HAP-1 (cell line): ENCODE measurements at regions of chr18 and their contacts with region 1.

Region 1: GRCh38 chr18:50009773-50010335 is 185.1 kb downstream of the MYO5B start:
- DNase-seq: peak; percentile 44 to 71
- H3K4me3 ChIP-seq: no peak overlapping the region
- H3K4me1 ChIP-seq: no peaks in the 10 kb centered on the region
- H3K27me3 ChIP-seq: no peaks in the 10 kb centered on the region

Region 2: DNA sequence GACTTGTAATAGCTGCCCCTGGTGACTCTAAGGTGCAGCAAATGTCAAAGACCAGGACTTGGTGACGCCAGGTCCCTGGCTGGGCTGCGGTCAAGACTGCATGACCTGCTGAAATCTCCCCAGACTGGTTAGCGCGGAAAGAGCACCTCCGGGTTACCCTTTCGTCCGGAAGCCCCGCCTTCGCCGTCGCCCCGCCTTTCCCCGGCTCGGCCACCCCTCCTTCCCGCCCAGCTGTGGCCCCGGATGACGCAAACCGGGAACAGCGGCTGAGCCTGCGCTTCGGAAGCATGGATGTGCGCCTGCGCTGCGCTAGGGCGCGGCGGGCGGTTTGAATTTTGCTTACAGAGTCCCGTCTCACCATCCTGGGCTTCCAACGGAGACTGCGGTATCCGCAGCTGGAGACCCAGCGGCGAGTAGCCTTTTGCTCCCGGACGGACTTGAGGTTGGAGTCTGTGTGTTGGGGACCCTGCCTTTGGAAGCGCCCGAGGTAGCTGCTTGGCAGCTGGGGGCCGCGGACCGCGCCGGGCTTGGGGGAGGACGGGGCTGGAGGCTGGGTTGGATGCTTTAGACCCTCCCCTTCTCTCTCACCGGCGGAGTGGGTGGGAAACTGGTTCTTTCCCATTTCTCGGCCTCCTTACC is 365.0 kb after region 1 on chr18 and contains the start of gene SKA1:
- in situ Hi-C with region 1: loop called (anchors 25 kb)
- DNase-seq: peak; percentile 91 to 95
- H3K4me3 ChIP-seq: peak within 1 kb of the TSS; percentile 93
- H3K4me1 ChIP-seq: peaks cover 20% of the 10 kb centered on the region
- H3K27me3 ChIP-seq: no peaks in the 10 kb centered on the region; the same call in 1 of the 2 replicates